Naive thymus-derived CD4-positive, alpha-beta T cell (primary cell): ENCODE measurements at regions of chr18 and their contacts with region 1.

Region 1: GRCh38 chr18:23503038-23503962 is at the start of gene RMC1:
- DNase-seq: peak; percentile 91 to 99 (median 95)
- ATAC-seq: peak; percentile 96
- H3K4me3 ChIP-seq: peak within 1 kb of the TSS; percentile 95
- H3K4me3 Mint-ChIP-seq: peak within 1 kb of the TSS; percentile 91 to 99 (median 96)
- H3K27ac ChIP-seq: peak within 1 kb of the TSS; percentile 88
- H3K27ac Mint-ChIP-seq: peak within 1 kb of the TSS; percentile 93 to 99 (median 96)
- H3K4me1 ChIP-seq: peaks cover 22% of the 10 kb centered on the region in 2 donors
- H3K4me1 Mint-ChIP-seq: peaks cover 28 to 70% (median 64%) of the 10 kb centered on the region in 7 donors
- H3K27me3 ChIP-seq: no peaks in the 10 kb centered on the region
- H3K27me3 Mint-ChIP-seq: no peaks in the 10 kb centered on the region
- total RNA-seq, gene RMC1: 45.7 to 59.7 (median 50.0) TPM

Region 2: GRCh38 chr18:23131693-23132319 is 371.5 kb before region 1 on chr18:
- CTCF ChIA-PET with region 1: interaction called, 3 read pairs
- POLR2A ChIA-PET with region 1: no interaction called
- intact Hi-C with region 1: loop called in 1 of 2 experiments (anchors 1 kb)
- DNase-seq: peak in 8 of 9 donors; percentile 33 to 73 (median 58)
- ATAC-seq: peak; percentile 64
- H3K4me3 ChIP-seq: no peak overlapping the region
- H3K4me3 Mint-ChIP-seq: no peak overlapping the region
- H3K27ac ChIP-seq: no peak overlapping the region
- H3K27ac Mint-ChIP-seq: peak overlapping the region in 1 of 9 donors; percentile 9
- H3K4me1 ChIP-seq: peaks cover 0 to 14% of the 10 kb centered on the region in 2 donors
- H3K4me1 Mint-ChIP-seq: peaks cover 0 to 20% (median 15%) of the 10 kb centered on the region in 7 donors
- H3K27me3 ChIP-seq: peaks cover 3 to 9% of the 10 kb centered on the region in 2 donors
- H3K27me3 Mint-ChIP-seq: peaks cover 16 to 30% (median 25%) of the 10 kb centered on the region in 5 donors

Region 3: GRCh38 chr18:23487738-23488570 is 15.3 kb before region 1 on chr18:
- CTCF ChIA-PET with region 1: interaction called, 16 read pairs
- POLR2A ChIA-PET with region 1: interaction called, 17 read pairs
- intact Hi-C with region 1: loop called (anchors 1 to 2 kb)
- DNase-seq: peak in 8 of 9 donors; percentile 32 to 62 (median 46)
- ATAC-seq: peak; percentile 75
- H3K4me3 ChIP-seq: peak overlapping the region; percentile 46
- H3K4me3 Mint-ChIP-seq: peak overlapping the region; percentile 69 to 90 (median 78)
- H3K27ac ChIP-seq: peak overlapping the region; percentile 67
- H3K27ac Mint-ChIP-seq: peak overlapping the region; percentile 78 to 93 (median 92)
- H3K4me1 ChIP-seq: no peaks in the 10 kb centered on the region
- H3K4me1 Mint-ChIP-seq: peaks cover 6 to 29% (median 24%) of the 10 kb centered on the region in 7 donors
- H3K27me3 ChIP-seq: no peaks in the 10 kb centered on the region
- H3K27me3 Mint-ChIP-seq: no peaks in the 10 kb centered on the region

Region 4: GRCh38 chr18:23703057-23703986 is 200.0 kb after region 1 on chr18:
- CTCF ChIA-PET with region 1: interaction called, 4 read pairs
- POLR2A ChIA-PET with region 1: no interaction called
- intact Hi-C with region 1: loop called (anchors 1 to 5 kb)
- DNase-seq: peak in 7 of 9 donors; percentile 18 to 62 (median 47)
- ATAC-seq: peak; percentile 77
- H3K4me3 ChIP-seq: no peak overlapping the region
- H3K4me3 Mint-ChIP-seq: no peak overlapping the region
- H3K27ac ChIP-seq: no peak overlapping the region
- H3K27ac Mint-ChIP-seq: no peak overlapping the region
- H3K4me1 ChIP-seq: no peaks in the 10 kb centered on the region
- H3K4me1 Mint-ChIP-seq: no peaks in the 10 kb centered on the region
- H3K27me3 ChIP-seq: no peaks in the 10 kb centered on the region
- H3K27me3 Mint-ChIP-seq: peaks cover 8 to 65% (median 21%) of the 10 kb centered on the region in 5 donors

Region 5: DNA sequence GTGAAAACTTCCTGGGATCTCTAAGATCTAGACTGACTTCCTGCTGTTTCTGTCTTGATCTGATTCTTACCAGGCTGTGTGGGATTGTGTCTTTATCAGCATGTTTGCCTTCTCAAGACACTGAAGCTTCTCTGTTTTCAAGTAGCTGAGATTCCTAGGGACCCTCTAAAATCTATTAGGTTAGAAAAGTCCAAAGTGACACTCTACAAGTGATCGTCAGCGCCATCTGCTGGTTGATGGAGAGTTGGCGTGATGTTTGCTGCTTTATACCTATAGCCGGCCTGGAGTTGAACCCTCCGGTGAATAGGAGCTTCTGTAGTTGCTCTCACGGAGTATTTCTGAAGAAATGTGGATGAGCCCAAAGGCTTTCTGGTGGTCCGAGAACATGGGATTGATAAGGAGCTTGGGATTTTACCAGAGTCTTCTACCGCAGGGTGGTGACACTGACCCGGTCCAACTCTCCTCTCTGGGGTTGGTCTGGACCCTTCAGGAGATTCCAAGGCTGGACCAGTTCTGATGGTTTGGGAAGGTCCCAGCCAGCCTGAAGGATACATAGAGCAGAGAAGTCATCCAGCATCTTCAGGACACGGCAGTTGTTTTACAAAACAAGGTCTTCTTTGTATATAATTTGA is 415.2 kb after region 1 on chr18:
- CTCF ChIA-PET with region 1: no interaction called
- POLR2A ChIA-PET with region 1: no interaction called
- intact Hi-C with region 1: loop called in 1 of 2 experiments (anchors 1 kb)
- DNase-seq: peak; percentile 47 to 74 (median 61)
- ATAC-seq: peak; percentile 87
- H3K4me3 ChIP-seq: no peak overlapping the region
- H3K4me3 Mint-ChIP-seq: no peak overlapping the region
- H3K27ac ChIP-seq: no peak overlapping the region
- H3K27ac Mint-ChIP-seq: peak overlapping the region in 3 of 9 donors; percentile 20 to 63 (median 62)
- H3K4me1 ChIP-seq: peaks cover 8 to 15% of the 10 kb centered on the region in 2 donors
- H3K4me1 Mint-ChIP-seq: peaks cover 10 to 31% (median 25%) of the 10 kb centered on the region in 7 donors
- H3K27me3 ChIP-seq: no peaks in the 10 kb centered on the region
- H3K27me3 Mint-ChIP-seq: peaks cover 0 to 27% (median 5%) of the 10 kb centered on the region in 5 donors

Region 6: GRCh38 chr18:24138789-24139616 is 635.7 kb after region 1 on chr18 and contains the start of gene CABYR:
- CTCF ChIA-PET with region 1: no interaction called
- POLR2A ChIA-PET with region 1: no interaction called
- intact Hi-C with region 1: loop called in 1 of 2 experiments (anchors 5 kb)
- DNase-seq: peak; percentile 60 to 87 (median 70)
- ATAC-seq: peak; percentile 96
- H3K4me3 ChIP-seq: peak within 1 kb of the TSS; percentile 81
- H3K4me3 Mint-ChIP-seq: peak within 1 kb of the TSS; percentile 85 to 97 (median 92)
- H3K27ac ChIP-seq: peak within 1 kb of the TSS; percentile 41
- H3K27ac Mint-ChIP-seq: peak within 1 kb of the TSS; percentile 43 to 90 (median 83)
- H3K4me1 ChIP-seq: peaks cover 11 to 13% of the 10 kb centered on the region in 2 donors
- H3K4me1 Mint-ChIP-seq: peaks cover 12 to 32% (median 26%) of the 10 kb centered on the region in 7 donors
- H3K27me3 ChIP-seq: peaks cover 0 to 6% of the 10 kb centered on the region in 2 donors
- H3K27me3 Mint-ChIP-seq: peaks cover 7 to 34% (median 12%) of the 10 kb centered on the region in 5 donors
- total RNA-seq, gene CABYR: 0.65 to 1.4 (median 1.1) TPM